ENCODE measurements at regions of chr6 and their contacts with region 1.

Region 1: DNA sequence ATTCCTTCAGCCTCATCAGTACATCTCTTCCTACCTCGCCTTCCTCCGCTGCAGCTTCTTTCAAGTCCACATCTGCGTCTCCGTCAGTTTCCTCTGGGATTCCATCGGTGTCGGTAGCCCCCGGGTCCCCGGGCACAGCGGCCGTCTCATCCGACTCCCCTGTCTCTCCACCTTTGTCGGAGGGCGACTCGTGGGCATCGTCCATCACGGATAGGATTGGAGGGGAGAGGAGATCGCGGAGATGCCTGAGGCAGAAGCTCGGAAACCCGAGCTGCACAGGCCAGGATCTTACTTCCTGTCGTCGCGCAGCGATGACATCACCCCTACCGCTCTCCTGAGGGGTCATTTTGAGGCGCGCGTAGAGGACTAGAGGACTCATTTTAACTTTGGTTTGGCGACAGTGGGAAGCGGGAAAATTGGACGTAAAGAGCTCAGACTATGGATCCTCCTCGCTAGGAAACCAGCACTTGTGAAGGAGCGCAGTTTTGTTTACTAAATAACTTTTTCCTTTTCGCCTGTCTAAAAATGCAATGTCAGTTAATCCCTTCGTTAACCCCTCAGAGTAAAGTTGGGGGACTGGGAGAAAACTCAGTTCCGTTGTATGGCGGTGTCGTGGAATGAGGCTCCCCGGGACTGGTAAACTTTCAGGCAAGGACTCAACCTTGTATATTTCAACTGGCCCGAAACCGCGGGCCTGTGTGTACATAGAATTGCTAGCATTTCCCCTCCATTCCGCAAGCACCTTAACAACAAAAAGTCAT is at the start of gene TAF11:
- DNase-seq: peak; percentile 89 to 93 (median 89)
- H3K4me3 ChIP-seq: peak within 1 kb of the TSS; percentile 84 to 97 (median 96)
- H3K4me3 Mint-ChIP-seq: peak within 1 kb of the TSS; percentile 99
- H3K27ac ChIP-seq: peak within 1 kb of the TSS; percentile 83 to 90
- H3K27ac Mint-ChIP-seq: peak within 1 kb of the TSS; percentile 98 to 100 (median 98)
- H3K4me1 ChIP-seq: peaks cover 26 to 41% of the 10 kb centered on the region in 2 donors
- H3K4me1 Mint-ChIP-seq: peaks cover 33% of the 10 kb centered on the region
- H3K27me3 ChIP-seq: no peaks in the 10 kb centered on the region
- H3K27me3 Mint-ChIP-seq: no peaks in the 10 kb centered on the region
- CTCF ChIP-seq: no peak
- polyA plus RNA-seq, gene TAF11: 22.9 to 29.9 (median 26.0) TPM

Region 2: DNA sequence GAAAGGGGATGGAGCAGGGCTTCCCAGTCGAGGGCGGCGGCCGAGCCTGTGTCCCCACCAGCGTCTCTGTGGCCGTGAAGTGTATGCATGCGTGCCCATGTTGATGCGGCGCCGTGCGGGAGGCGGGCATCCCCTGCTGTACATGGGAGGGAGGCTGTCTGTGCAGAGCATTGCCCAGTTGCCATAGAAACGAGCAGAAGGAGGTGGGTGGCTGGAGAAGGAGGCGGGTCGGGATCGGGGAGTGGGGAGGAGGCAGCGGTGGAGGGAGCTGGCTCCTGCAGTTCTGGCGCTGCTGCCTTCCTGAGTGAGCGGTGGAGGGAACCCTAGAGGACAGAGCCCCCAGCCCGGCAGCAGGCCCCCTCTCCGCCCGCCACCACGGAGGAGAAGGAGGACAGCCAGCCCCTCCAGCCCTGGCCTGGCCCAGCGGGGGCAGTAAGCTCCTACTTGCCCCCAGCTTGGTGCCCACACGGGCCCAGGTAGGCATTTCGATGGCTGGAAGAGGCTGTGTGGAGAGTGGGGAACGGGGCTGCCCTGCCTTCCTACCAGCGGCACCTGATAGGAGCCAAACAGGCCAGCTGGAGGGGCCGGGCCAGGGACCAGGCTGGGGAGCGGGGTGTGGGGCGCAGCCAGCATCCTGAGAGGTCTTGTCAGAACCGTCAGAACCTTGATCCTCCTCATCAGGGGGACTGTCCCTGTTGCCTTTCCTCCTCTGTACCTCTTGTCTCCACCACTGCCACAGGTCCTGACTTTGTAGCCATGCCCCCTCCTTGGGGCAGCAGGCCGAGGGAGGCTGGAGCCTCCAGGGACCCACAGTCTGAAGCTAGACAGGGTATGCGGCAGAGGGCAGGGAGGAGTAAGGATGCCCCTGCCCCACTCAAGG is 373.1 kb before region 1 on chr6:
- intact Hi-C with region 1: no loop called
- DNase-seq: no peak
- H3K4me3 ChIP-seq: no peak overlapping the region
- H3K4me3 Mint-ChIP-seq: peak overlapping the region in 1 of 2 donors; percentile 46
- H3K27ac ChIP-seq: no peak overlapping the region
- H3K27ac Mint-ChIP-seq: no peak overlapping the region
- H3K4me1 ChIP-seq: no peaks in the 10 kb centered on the region
- H3K4me1 Mint-ChIP-seq: no peaks in the 10 kb centered on the region
- H3K27me3 ChIP-seq: peaks cover 0 to 9% of the 10 kb centered on the region in 2 donors
- H3K27me3 Mint-ChIP-seq: peaks cover 21 to 29% (median 21%) of the 10 kb centered on the region in 3 donors
- CTCF ChIP-seq: no peak

Region 3: GRCh38 chr6:34791701-34792235 is 96.2 kb before region 1 on chr6 and contains the start of gene BLTP3A:
- intact Hi-C with region 1: loop called in 1 of 2 experiments (anchors 10 kb)
- DNase-seq: peak; percentile 54 to 72 (median 64)
- H3K4me3 ChIP-seq: peak within 1 kb of the TSS; percentile 71 to 96 (median 88)
- H3K4me3 Mint-ChIP-seq: peak within 1 kb of the TSS; percentile 98
- H3K27ac ChIP-seq: peak within 1 kb of the TSS; percentile 88 to 96
- H3K27ac Mint-ChIP-seq: peak within 1 kb of the TSS; percentile 94 to 99 (median 97)
- H3K4me1 ChIP-seq: peaks cover 15 to 26% of the 10 kb centered on the region in 2 donors
- H3K4me1 Mint-ChIP-seq: peaks cover 28% of the 10 kb centered on the region
- H3K27me3 ChIP-seq: no peaks in the 10 kb centered on the region
- H3K27me3 Mint-ChIP-seq: peaks cover 0 to 5% (median 0%) of the 10 kb centered on the region in 3 donors
- CTCF ChIP-seq: no peak
- polyA plus RNA-seq, gene BLTP3A: 1.0 to 7.2 (median 1.2) TPM

Region 4: GRCh38 chr6:35048631-35049083 is 160.7 kb after region 1 on chr6:
- intact Hi-C with region 1: loop called in 1 of 2 experiments (anchors 10 kb)
- DNase-seq: peak; percentile 44 to 58 (median 55)
- H3K4me3 ChIP-seq: peak overlapping the region; percentile 30 to 73 (median 50)
- H3K4me3 Mint-ChIP-seq: no peak overlapping the region
- H3K27ac ChIP-seq: peak overlapping the region; percentile 60 to 87
- H3K27ac Mint-ChIP-seq: no peak overlapping the region
- H3K4me1 ChIP-seq: peaks cover 56 to 78% of the 10 kb centered on the region in 2 donors
- H3K4me1 Mint-ChIP-seq: peaks cover 32% of the 10 kb centered on the region
- H3K27me3 ChIP-seq: no peaks in the 10 kb centered on the region
- H3K27me3 Mint-ChIP-seq: peaks cover 0 to 2% (median 0%) of the 10 kb centered on the region in 3 donors
- CTCF ChIP-seq: peak; percentile 56